GM10248 (cell line): ENCODE measurements at regions of chr14 and their contacts with region 1.

Region 1: DNA sequence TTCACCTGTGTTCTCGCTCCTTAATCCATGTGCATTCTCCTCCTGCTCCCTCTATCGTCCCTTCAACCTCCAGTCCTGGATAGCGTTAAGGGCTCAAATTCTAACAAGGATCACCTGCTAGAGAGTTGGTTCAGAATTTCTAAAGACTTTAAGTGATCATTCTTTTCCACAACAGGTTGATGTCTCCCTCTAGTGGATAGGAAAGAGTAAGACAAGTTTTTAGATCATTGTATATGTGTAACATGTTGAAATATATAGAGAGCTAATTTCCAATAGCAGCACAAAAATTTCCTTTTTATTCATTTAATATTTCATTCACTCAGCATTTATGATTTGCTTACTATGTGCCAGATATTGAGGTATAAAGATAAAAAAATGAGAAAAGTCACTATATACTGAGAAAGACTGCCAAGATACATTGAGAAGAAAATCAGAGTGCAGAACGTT is 9.3 kb upstream of the ESR2 start:
- DNase-seq: peak; percentile 77
- CTCF ChIP-seq: peak; percentile 70

Region 2: DNA sequence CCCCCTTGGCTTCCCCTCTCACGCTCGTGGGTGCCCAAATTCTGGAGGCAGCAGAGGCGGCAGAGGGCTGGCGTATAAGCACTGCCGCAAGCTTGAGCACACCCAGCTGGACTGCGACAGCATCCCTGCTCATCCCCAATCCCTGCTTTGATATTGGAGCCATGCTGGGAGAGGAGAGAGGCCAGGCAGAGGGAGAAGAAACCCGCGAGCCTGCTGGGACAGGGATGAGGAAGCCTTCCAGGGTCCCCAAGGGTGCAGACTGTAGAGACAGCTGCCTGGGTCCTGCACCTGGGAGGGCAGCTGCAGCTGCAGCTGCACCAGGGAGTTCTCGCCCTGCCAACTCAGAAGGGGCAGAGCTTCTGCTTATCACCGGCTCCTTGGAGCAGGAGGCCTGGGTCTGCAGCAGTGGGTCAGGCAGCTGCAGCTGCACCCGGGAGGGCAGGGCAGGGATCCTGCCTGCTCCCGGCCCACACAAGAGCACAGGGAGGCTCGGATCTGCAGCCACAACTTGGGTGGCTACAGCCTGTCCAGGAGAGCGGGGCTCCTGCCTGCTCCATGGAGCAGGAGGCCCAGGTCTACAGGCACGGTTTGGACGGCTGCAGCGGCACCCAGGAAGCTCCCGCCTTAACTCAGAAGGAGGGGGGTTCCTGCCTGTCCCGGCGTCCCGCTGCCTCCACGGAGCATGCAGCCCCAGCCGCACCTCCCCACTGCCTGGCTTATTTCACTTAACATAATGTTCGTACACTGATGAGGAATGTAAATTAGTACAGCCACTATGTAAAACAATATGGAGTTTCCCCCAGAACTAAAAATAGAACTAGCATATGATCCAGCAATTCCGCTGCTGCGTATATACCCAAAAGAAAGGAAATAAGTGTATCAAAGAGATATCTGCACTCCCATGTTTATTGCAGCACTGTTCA is 515.2 kb before region 1 on chr14:
- CTCF ChIA-PET with region 1: interaction called, 19 read pairs
- POLR2A ChIA-PET with region 1: interaction called, 3 read pairs
- DNase-seq: no peak
- CTCF ChIP-seq: no peak

Region 3: GRCh38 chr14:64012720-64013119 is 290.8 kb before region 1 on chr14:
- CTCF ChIA-PET with region 1: interaction called, 22 read pairs
- POLR2A ChIA-PET with region 1: no interaction called
- DNase-seq: no peak
- CTCF ChIP-seq: no peak

Region 4: DNA sequence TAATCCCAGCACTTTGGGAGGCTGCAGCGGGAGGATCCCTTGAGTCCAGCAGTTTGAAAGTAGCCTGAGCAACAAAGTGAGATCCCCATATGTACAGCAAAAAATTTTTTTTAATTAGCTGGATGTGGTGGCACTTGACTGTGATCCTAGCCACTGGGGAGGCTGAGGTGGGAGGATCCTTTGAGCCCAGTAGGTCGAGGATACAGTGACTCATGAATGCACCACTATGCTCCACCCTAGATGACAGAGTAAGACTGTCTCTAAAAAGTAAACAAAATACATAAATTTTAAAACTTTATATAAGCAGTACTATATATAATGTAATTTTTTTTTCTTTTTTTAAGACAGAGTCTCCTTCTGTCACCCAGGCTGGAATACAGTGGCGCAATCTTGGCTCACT is 124.7 kb before region 1 on chr14:
- CTCF ChIA-PET with region 1: interaction called, 12 read pairs
- POLR2A ChIA-PET with region 1: no interaction called
- DNase-seq: no peak
- CTCF ChIP-seq: no peak

Region 5: DNA sequence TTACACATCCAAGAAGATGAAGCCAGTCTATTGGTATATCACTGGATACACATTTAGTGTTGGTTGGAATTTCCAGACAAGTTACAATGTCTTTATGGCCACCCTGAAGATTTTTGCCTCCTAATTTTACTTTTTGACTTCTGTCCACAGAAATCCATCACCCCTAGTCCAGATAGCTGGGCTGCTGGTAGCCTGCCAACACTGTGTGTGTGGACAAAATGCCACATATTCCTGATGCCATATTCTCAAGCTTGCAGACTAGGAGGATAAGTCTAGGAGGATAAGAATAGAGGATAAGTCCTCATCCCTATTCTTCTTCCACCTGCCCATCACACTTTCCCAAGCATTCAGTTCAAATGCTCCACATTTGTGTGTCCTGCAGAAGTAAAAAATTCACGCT is 13.9 kb before region 1 on chr14:
- CTCF ChIA-PET with region 1: interaction called, 52 read pairs
- POLR2A ChIA-PET with region 1: no interaction called
- DNase-seq: no peak
- CTCF ChIP-seq: no peak

Region 6: DNA sequence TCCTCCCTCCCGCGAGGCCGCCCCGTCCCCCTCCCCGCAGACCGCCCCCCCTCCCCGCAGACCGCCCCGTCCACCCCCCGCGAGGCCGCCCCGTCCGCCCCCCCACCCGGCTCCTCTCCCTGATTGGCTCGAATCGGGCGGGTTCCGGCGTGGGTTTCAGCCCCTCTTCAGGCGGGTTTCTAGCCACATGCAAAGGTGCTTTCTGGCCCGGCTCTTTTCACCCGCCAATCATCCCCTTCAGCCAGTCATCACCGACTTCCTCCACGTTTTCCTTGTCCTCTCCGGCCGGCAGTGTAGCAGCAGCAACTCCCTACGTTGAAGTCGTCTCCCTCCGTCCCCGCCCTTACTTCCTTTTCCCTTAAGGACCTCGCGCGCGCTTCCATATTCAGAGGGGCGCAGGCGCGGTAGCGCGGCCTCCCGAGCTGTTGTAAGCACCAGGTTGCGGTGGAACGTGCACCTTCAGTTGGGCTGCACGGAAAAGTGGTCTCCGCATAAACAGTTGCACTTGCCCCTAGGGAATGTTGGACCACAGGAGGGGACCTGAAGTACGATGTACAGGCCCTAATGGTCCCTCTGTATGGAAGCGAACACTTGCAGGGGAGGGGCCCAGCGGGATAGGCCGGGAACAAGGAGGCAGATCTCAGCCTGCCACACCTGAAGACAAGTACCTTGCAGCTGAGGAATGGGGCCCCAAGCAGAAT is 35.3 kb after region 1 on chr14:
- CTCF ChIA-PET with region 1: interaction called, 13 read pairs
- POLR2A ChIA-PET with region 1: no interaction called
- DNase-seq: peak; percentile 97
- CTCF ChIP-seq: no peak

Region 7: GRCh38 chr14:64410084-64410774 is 106.7 kb after region 1 on chr14:
- CTCF ChIA-PET with region 1: no interaction called
- POLR2A ChIA-PET with region 1: no interaction called
- DNase-seq: no peak
- CTCF ChIP-seq: no peak

Region 8: DNA sequence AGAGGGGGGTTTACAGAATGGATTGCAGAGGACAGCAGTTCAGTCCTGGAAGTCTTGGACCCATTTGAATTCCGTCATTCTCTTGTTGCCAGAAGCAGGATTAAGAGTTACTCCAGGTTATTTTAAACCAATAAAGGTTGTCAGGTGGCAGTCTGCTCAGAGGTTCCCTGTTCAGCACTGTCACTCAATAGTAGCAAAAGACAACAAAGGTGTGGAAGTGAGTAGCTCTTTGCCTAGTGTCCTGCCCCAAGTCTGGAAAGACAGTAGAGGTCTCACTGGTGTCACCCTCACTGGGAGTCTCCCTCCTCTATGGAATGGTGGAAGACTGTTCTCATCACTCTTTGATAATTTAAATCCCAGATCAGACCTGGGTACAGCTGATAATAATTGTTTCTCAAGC is 327.3 kb after region 1 on chr14:
- CTCF ChIA-PET with region 1: no interaction called
- POLR2A ChIA-PET with region 1: no interaction called
- DNase-seq: no peak
- CTCF ChIP-seq: no peak